ENCODE measurements at regions of chr12 and their contacts with region 1.

Region 1: GRCh38 chr12:21683115-21683514 is 25.5 kb upstream of the LDHB start:
- DNase-seq: no peak
- H3K4me3 ChIP-seq: no peak overlapping the region
- H3K27ac ChIP-seq: no peak overlapping the region
- H3K4me1 ChIP-seq: no peaks in the 10 kb centered on the region
- H3K27me3 ChIP-seq: peaks cover 43% of the 10 kb centered on the region
- CTCF ChIP-seq: no peak

Region 2: GRCh38 chr12:21248679-21249078 is 434.4 kb before region 1 on chr12:
- CTCF ChIA-PET with region 1: interaction called, 4 read pairs
- POLR2A ChIA-PET with region 1: no interaction called
- intact Hi-C with region 1: loop called (anchors 5 kb)
- DNase-seq: peak; percentile 19
- H3K4me3 ChIP-seq: no peak overlapping the region
- H3K27ac ChIP-seq: no peak overlapping the region
- H3K4me1 ChIP-seq: no peaks in the 10 kb centered on the region
- H3K27me3 ChIP-seq: no peaks in the 10 kb centered on the region
- CTCF ChIP-seq: peak; percentile 34; the same call in 1 of the 2 replicates

Region 3: GRCh38 chr12:21308785-21309184 is 374.3 kb before region 1 on chr12:
- CTCF ChIA-PET with region 1: no interaction called
- POLR2A ChIA-PET with region 1: no interaction called
- intact Hi-C with region 1: loop called (anchors 5 kb)
- DNase-seq: no peak
- H3K4me3 ChIP-seq: no peak overlapping the region
- H3K27ac ChIP-seq: no peak overlapping the region
- H3K4me1 ChIP-seq: no peaks in the 10 kb centered on the region
- H3K27me3 ChIP-seq: peaks cover 16% of the 10 kb centered on the region
- CTCF ChIP-seq: no peak

Region 4: GRCh38 chr12:21370845-21371449 is 312.2 kb before region 1 on chr12:
- CTCF ChIA-PET with region 1: no interaction called
- POLR2A ChIA-PET with region 1: no interaction called
- intact Hi-C with region 1: loop called (anchors 10 kb)
- DNase-seq: no peak
- H3K4me3 ChIP-seq: no peak overlapping the region
- H3K27ac ChIP-seq: no peak overlapping the region
- H3K4me1 ChIP-seq: no peaks in the 10 kb centered on the region
- H3K27me3 ChIP-seq: peaks cover 15% of the 10 kb centered on the region
- CTCF ChIP-seq: no peak

Measured in A673 (cell line).